ENCODE measurements at regions of chr20 and their contacts with region 1.

Region 1: DNA sequence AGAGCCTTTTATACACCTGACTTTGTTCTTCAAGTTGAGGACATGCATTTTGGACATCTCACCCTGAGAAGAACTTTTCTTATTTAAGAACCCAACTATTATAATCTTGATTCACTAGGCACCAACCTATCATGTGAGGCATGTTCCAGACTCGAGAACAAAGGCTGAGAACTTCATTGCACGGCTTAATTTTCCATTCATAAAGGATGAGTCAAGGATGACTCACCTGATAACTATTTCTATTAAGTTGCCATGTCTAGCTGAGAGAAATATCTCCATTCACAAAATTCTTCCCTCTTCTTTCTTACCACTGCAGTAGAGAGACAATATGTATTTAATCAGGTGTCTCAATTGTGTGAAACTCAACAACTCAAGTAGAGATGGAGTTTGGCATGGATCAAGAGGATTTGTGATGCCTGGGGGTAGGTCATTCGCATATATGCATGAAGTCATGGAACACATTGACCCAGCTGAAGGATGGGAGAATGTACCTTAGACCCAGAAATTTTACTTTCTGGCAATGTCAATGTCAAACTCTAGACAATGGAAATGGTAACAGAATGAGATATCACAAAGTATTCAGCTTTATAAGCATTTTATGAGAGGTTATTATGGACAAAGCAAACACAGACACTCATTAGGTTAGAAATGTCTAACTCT is 208.7 kb upstream of the PRND start:
- DNase-seq: peak; percentile 33 to 87
- H3K4me3 ChIP-seq: no peak overlapping the region
- H3K27ac ChIP-seq: peak overlapping the region; percentile 39
- H3K4me1 ChIP-seq: peaks cover 28% of the 10 kb centered on the region
- H3K27me3 ChIP-seq: no peaks in the 10 kb centered on the region
- CTCF ChIP-seq: no peak

Region 2: GRCh38 chr20:4592316-4593148 is 79.5 kb after region 1 on chr20:
- CTCF ChIA-PET with region 1: no interaction called
- POLR2A ChIA-PET with region 1: no interaction called
- intact Hi-C with region 1: loop called (anchors 5 kb)
- DNase-seq: peak in 1 of 2 experiments; percentile 67
- H3K4me3 ChIP-seq: peak overlapping the region; percentile 48; the same call in 1 of the 2 replicates
- H3K27ac ChIP-seq: no peak overlapping the region
- H3K4me1 ChIP-seq: peaks cover 5% of the 10 kb centered on the region; the same call in 1 of the 2 replicates
- H3K27me3 ChIP-seq: no peaks in the 10 kb centered on the region
- CTCF ChIP-seq: peak; percentile 89

Measured in PC-9 (cell line).